Activated CD4-positive, alpha-beta memory T cell treated with anti-CD3 and anti-CD28 coated beads, Interleukin-2, amount 10 ng/mL, durations not matched to agents 7 days and 5 days (primary cell): ENCODE measurements at regions of chr9 and their contacts with region 1.

Region 1: DNA sequence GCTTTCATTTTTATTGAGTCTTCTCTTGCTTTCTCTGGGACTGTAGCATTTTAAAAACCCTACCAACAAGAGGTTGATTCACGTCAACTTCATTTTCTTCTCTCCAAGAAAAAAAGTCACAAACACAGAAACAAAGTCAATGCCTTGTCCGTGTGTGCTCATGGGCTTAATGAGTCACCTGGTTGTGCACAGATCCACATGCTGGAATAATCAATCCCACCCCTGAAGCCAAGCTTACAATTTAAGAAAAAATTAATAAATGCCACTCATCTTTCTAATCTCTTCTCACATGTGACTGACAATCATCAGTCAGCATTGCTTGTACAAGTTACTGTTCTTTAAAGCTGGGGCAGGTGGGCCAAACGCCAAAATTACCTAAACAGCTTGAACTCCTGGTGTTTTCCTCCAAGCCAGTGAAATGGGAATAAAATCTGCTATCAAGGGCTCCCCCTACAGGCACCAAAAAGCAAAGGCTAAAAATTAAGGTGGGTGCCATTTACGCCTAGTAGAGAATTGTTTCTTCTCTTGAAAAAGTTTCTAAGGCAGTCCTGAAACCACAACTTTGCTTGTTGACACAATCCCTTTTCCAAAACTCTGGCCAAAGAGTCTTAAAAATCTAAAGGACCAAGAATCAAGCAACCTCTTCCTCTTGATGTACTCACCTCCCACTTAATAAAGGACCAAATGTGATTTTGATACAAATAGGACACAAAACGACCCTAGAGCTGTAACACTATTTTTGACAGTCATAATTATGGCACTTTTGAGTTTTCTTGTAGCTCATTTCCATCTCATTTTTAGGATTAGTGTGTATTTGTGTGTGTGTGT is 21.3 kb downstream of the TRMO start:
- DNase-seq: no peak
- H3K4me3 Mint-ChIP-seq: no peak overlapping the region
- H3K27ac Mint-ChIP-seq: peak overlapping the region; percentile 2
- H3K4me1 Mint-ChIP-seq: peaks cover 46% of the 10 kb centered on the region
- H3K27me3 Mint-ChIP-seq: no peaks in the 10 kb centered on the region

Region 2: GRCh38 chr9:97696803-97697601 is 203.9 kb before region 1 on chr9 and contains the start of gene XPA:
- CTCF ChIA-PET with region 1: interaction called, 10 read pairs
- POLR2A ChIA-PET with region 1: interaction called, 6 read pairs
- DNase-seq: peak; percentile 96
- H3K4me3 Mint-ChIP-seq: peak within 1 kb of the TSS; percentile 87
- H3K27ac Mint-ChIP-seq: peak within 1 kb of the TSS; percentile 66
- H3K4me1 Mint-ChIP-seq: peaks cover 43% of the 10 kb centered on the region
- H3K27me3 Mint-ChIP-seq: peaks cover 6% of the 10 kb centered on the region
- total RNA-seq, gene XPA: 12.1 to 12.4 TPM

Region 3: GRCh38 chr9:97845130-97845529 is 55.8 kb before region 1 on chr9:
- CTCF ChIA-PET with region 1: no interaction called
- POLR2A ChIA-PET with region 1: no interaction called
- DNase-seq: no peak
- H3K4me3 Mint-ChIP-seq: no peak overlapping the region
- H3K27ac Mint-ChIP-seq: no peak overlapping the region
- H3K4me1 Mint-ChIP-seq: peaks cover 12% of the 10 kb centered on the region
- H3K27me3 Mint-ChIP-seq: peaks cover 75% of the 10 kb centered on the region

Region 4: DNA sequence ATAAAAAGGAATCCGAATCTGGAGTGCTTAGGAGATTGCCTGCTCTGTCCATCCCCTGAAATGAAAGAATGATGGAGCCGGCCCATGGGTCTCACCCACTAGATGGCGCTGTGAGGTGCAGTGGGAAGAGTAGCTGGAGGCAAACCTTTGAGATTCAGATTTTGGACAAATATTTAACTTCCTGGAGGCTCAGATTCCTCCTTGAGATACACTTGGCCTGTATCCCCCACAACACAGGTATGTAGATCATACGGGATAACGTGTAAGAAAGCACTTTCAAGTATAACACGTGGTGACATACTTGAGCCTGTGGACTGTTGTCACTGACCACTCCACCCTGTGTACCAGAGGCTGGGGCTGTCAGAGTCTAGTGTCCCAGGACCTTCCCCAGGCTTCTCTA is 10.9 kb before region 1 on chr9:
- CTCF ChIA-PET with region 1: interaction called, 156 read pairs
- POLR2A ChIA-PET with region 1: interaction called, 15 read pairs
- DNase-seq: peak; percentile 75
- H3K4me3 Mint-ChIP-seq: no peak overlapping the region
- H3K27ac Mint-ChIP-seq: no peak overlapping the region
- H3K4me1 Mint-ChIP-seq: peaks cover 4% of the 10 kb centered on the region
- H3K27me3 Mint-ChIP-seq: no peaks in the 10 kb centered on the region

Region 5: DNA sequence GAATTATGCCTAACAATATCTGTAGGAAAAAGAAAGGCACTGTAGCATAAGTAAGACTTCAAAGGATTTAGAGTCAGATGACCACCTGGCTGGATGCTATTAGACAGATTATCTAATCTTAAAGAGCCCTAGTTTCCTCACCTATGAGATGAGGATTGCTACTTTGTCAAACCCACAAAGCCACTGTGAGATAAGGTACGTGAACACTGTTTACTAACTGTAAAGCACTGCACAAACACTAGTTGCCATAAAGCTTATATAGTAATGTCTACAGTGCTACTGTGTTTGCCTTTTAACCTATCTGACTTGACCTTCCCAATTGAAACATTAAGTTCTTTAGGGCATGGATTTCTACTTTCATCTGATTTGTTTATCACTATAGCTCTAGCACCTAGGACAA is 11.0 kb after region 1 on chr9:
- CTCF ChIA-PET with region 1: interaction called, 175 read pairs
- POLR2A ChIA-PET with region 1: interaction called, 360 read pairs
- DNase-seq: no peak
- H3K4me3 Mint-ChIP-seq: no peak overlapping the region
- H3K27ac Mint-ChIP-seq: no peak overlapping the region
- H3K4me1 Mint-ChIP-seq: peaks cover 62% of the 10 kb centered on the region
- H3K27me3 Mint-ChIP-seq: no peaks in the 10 kb centered on the region

Region 6: DNA sequence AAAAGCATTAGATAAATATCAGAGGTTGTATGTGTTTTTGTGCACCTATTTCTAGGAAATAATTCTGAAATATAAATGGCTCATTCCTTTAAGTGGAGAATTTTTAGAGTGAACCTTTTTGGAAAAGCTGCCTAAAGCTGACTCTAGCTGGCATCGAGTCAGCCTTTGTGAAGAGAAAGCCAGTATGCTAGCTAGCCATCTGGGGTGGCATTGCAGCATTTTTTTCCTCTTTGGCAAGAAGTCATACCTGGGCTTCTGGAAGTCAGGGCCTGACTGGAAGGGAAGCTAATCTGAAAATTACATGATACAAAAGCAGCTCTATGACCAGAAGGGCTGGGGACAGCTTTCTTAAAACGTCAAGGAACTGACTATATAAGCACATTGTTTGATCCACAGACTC is 101.9 kb after region 1 on chr9:
- CTCF ChIA-PET with region 1: no interaction called
- POLR2A ChIA-PET with region 1: no interaction called
- DNase-seq: no peak
- H3K4me3 Mint-ChIP-seq: no peak overlapping the region
- H3K27ac Mint-ChIP-seq: peak overlapping the region; percentile 21
- H3K4me1 Mint-ChIP-seq: peaks cover 43% of the 10 kb centered on the region
- H3K27me3 Mint-ChIP-seq: no peaks in the 10 kb centered on the region

Region 7: GRCh38 chr9:98129451-98129881 is 228.5 kb after region 1 on chr9:
- CTCF ChIA-PET with region 1: no interaction called
- POLR2A ChIA-PET with region 1: no interaction called
- DNase-seq: no peak
- H3K4me3 Mint-ChIP-seq: no peak overlapping the region
- H3K27ac Mint-ChIP-seq: no peak overlapping the region
- H3K4me1 Mint-ChIP-seq: peaks cover 11% of the 10 kb centered on the region
- H3K27me3 Mint-ChIP-seq: no peaks in the 10 kb centered on the region